ENCODE measurements at regions of chr13 and their contacts with region 1.

Region 1: DNA sequence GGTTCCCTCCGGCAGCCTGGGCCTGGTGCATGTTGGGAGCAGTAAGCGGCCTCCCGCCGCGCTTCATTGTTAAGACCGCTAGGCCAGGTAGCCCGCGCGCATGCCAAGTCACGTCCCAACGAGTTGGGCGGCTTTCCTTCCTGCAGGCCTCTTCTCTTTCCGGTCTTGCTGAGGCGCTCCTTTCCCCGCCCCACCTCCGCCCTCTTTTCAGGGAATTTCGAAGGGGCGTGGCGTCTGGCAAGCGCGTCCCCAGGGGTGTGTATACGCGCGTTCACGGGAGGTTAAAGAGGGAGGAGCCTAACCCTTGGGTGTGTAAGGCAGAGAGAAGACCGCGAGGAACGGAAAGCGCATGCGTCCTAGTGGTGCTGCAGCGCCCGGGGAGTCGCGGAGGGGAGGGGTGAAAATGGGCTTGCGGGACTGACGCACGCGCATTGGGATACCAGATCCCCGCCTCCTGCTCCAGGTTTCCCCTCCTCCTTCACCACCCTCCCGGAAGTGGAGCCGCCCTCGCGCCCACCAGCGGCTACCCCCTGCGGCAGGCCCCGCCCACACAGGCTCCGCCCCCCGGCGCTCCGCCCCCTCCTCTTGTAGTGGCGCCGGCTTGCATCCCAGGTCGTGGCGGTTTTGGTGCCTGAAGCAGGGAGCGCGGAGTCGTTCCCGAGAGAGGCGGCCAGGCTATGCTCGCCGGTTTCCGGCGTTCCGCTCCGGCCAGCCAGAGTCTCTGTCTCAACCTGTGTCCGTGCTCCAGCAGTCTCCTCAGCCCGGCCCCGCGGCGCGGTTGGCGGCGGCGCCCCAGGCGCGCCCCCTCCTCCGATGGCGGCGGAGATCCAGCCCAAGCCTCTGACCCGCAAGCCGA is at the start of gene WDFY2:
- DNase-seq: peak; percentile 99 to 100 (median 100)
- H3K4me3 ChIP-seq: peak within 1 kb of the TSS; percentile 85 to 96 (median 91)
- H3K4me3 Mint-ChIP-seq: peak within 1 kb of the TSS; percentile 96 to 98
- H3K27ac ChIP-seq: peak within 1 kb of the TSS; percentile 85 to 89
- H3K27ac Mint-ChIP-seq: peak within 1 kb of the TSS; percentile 94 to 99 (median 99)
- H3K4me1 ChIP-seq: peaks cover 32 to 57% of the 10 kb centered on the region in 2 donors
- H3K4me1 Mint-ChIP-seq: peaks cover 51% of the 10 kb centered on the region
- H3K27me3 ChIP-seq: no peaks in the 10 kb centered on the region
- H3K27me3 Mint-ChIP-seq: peaks cover 0 to 5% (median 0%) of the 10 kb centered on the region in 3 donors
- CTCF ChIP-seq: no peak
- polyA plus RNA-seq, gene WDFY2: 6.5 to 40.1 (median 9.1) TPM

Region 2: GRCh38 chr13:50955216-50955615 is 628.9 kb before region 1 on chr13:
- intact Hi-C with region 1: no loop called
- DNase-seq: no peak
- H3K4me3 ChIP-seq: no peak overlapping the region
- H3K4me3 Mint-ChIP-seq: no peak overlapping the region
- H3K27ac ChIP-seq: no peak overlapping the region
- H3K27ac Mint-ChIP-seq: no peak overlapping the region
- H3K4me1 ChIP-seq: no peaks in the 10 kb centered on the region
- H3K4me1 Mint-ChIP-seq: no peaks in the 10 kb centered on the region
- H3K27me3 ChIP-seq: no peaks in the 10 kb centered on the region
- H3K27me3 Mint-ChIP-seq: no peaks in the 10 kb centered on the region
- CTCF ChIP-seq: no peak

Region 3: GRCh38 chr13:51674279-51674678 is 90.2 kb after region 1 on chr13:
- intact Hi-C with region 1: no loop called
- DNase-seq: no peak
- H3K4me3 ChIP-seq: no peak overlapping the region
- H3K4me3 Mint-ChIP-seq: no peak overlapping the region
- H3K27ac ChIP-seq: peak overlapping the region in 1 of 2 donors; percentile 36
- H3K27ac Mint-ChIP-seq: peak overlapping the region in 3 of 7 donors; percentile 4 to 6 (median 4)
- H3K4me1 ChIP-seq: peaks cover 7 to 19% of the 10 kb centered on the region in 2 donors
- H3K4me1 Mint-ChIP-seq: peaks cover 19% of the 10 kb centered on the region
- H3K27me3 ChIP-seq: no peaks in the 10 kb centered on the region
- H3K27me3 Mint-ChIP-seq: peaks cover 0 to 2% (median 0%) of the 10 kb centered on the region in 3 donors
- CTCF ChIP-seq: no peak

Region 4: GRCh38 chr13:51729866-51730546 is 145.9 kb after region 1 on chr13:
- intact Hi-C with region 1: loop called (anchors 10 kb)
- DNase-seq: peak in 1 of 3 donors; percentile 6
- H3K4me3 ChIP-seq: no peak overlapping the region
- H3K4me3 Mint-ChIP-seq: no peak overlapping the region
- H3K27ac ChIP-seq: peak overlapping the region in 1 of 2 donors; percentile 46
- H3K27ac Mint-ChIP-seq: no peak overlapping the region
- H3K4me1 ChIP-seq: peaks cover 19 to 23% of the 10 kb centered on the region in 2 donors
- H3K4me1 Mint-ChIP-seq: peaks cover 11% of the 10 kb centered on the region
- H3K27me3 ChIP-seq: no peaks in the 10 kb centered on the region
- H3K27me3 Mint-ChIP-seq: no peaks in the 10 kb centered on the region
- CTCF ChIP-seq: no peak